Endothelial cell of umbilical vein (primary cell): ENCODE measurements at regions of chr10 and their contacts with region 1.

Region 1: DNA sequence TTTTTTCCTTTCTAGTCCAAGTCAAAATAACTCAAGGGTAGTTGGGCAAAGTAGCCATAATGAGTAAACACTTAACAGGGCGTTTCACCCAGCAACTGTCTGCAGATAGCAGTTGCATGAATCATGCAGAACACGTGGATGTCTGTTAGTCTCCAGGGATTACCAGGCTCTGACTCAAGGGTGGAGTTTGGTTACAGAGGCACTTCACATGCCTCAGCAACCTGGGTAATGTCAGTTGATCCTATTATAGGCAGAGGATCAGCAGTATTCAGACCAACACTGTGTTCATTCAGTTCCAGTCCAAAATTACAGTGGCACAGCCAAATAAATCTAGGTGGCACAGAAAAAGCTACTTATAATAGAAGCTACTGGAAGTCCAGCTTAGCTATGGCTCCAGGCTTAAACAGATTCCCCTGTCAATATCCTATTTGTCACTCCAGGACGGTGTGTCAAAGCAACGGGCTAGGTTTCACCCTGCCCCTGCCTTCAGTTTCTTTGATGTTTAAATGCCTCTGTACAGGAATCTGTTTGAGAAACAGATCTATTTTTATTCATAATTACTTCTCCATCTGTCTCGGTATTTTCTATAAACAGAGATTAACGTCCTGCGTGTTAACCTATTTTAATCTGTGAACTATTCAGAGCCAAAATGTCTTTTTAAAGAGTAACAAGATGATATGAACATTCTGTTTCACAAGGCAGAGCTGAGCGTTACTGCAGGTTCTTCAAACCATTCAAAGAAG is 162.7 kb upstream of the AKR1E2 start:
- DNase-seq: peak; percentile 97
- H3K4me3 ChIP-seq: no peak overlapping the region
- H3K27ac ChIP-seq: peak overlapping the region; percentile 97
- H3K4me1 ChIP-seq: peaks cover 23% of the 10 kb centered on the region
- H3K27me3 ChIP-seq: no peaks in the 10 kb centered on the region
- CTCF ChIP-seq: no peak
- POLR2A ChIP-seq: peak; percentile 65

Region 2: DNA sequence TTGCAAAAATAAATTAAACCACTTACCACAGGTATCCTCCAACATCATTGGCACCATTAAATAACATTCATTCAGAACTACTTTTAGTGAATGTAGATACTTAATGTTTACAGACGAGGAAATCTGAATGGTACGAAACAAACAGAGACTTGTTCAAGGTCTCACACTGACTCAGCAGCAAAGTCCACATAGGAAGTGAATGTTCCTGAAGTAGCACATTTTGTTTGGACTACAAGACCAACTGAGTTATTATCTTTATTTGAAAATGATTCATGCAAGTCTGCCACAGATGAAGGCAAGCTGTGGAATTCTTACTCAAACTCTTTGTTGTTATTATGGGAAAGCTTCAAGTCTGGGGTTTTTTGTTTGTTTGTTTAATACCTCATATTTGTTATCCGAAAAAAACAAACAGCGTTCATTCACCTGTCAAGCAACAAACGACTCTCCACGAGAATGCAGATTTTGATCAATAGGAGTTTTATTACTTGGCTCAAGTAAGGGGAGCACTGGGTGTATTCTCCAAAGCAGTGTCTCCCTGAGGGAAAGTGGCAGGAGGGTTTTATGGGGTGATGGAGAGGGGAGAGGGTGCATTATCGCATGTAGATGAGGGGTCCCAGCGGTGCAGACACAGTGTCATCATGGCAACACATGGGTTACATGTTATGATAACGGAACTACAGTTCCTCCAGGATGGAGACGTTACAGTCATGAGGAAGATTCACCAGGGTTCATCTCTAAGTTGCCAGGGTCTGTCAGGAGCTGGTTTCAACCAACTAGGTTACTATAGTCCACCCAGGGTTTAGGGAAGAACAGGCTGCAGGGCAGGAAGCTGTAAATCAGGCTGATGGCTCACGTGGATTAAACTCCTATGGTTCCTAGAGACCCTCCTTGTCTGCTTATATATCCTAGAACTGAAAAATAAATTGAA is 15.0 kb after region 1 on chr10:
- CTCF ChIA-PET with region 1: interaction called, 10 read pairs
- POLR2A ChIA-PET with region 1: interaction called, 10 read pairs
- dilution Hi-C with region 1: no loop called
- intact Hi-C with region 1: loop called (anchors 2 kb)
- DNase-seq: peak; percentile 94
- H3K4me3 ChIP-seq: peak overlapping the region; percentile 32 to 99 (median 71)
- H3K27ac ChIP-seq: peak overlapping the region; percentile 84
- H3K4me1 ChIP-seq: peaks cover 31% of the 10 kb centered on the region
- H3K27me3 ChIP-seq: no peaks in the 10 kb centered on the region
- CTCF ChIP-seq: no peak
- POLR2A ChIP-seq: no peak

Region 3: DNA sequence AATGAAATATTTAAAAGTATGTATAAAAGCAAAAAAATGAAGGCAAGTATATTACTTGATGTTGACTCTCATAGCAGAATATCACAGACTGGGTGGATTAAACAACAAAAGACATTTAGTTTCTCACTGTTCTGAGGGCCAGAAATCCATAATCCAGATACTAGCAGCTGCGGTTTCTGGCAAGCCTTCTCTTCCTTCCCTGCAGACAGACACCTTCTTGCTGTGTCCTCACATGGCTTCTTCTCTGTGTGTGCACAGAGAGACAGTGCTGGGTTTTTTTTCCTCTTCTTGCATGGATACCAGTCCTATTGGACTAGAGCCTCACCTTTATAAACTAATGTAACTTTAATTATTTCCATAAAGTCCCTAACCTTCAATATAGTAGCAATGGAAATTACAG is 34.7 kb after region 1 on chr10:
- CTCF ChIA-PET with region 1: no interaction called
- POLR2A ChIA-PET with region 1: no interaction called
- dilution Hi-C with region 1: no loop called
- intact Hi-C with region 1: no loop called
- DNase-seq: peak; percentile 38
- H3K4me3 ChIP-seq: no peak overlapping the region
- H3K27ac ChIP-seq: no peak overlapping the region
- H3K4me1 ChIP-seq: peaks cover 19% of the 10 kb centered on the region
- H3K27me3 ChIP-seq: no peaks in the 10 kb centered on the region
- CTCF ChIP-seq: no peak
- POLR2A ChIP-seq: no peak

Region 4: DNA sequence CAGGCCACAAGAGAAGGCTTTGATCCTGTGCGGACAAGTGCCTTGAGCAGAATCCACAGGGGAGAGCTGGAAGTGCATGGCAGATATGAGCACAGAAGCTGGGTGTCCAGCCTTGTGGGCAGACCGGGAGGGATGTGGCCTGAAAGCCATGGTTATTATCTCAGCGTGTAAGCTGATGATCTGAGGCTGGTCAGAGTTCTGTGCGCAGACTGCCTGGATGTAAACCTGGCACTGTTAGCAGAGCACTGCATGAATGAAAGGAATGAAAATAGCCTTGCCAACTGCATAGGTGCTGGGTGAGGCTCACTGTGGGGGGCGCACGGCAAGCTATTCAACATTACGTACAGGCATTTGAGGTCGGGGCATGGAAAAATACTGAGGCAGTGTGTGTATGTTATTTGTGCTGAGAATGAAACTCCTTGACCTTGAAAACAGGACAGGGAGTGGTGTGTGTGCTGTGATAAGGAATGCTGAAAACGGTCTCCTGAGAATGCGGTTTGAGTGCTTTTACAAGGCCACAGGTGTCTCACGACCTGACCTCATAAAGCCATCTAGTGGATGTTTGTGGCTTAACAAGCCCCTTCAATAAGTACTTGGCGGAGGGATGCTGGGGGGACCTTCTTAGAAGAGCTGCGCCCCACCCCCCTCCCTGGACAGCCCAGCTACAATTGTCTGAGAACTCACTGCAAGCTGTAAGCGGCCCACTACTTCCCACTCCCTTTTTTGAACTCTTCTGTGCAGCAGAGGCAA is 318.6 kb after region 1 on chr10:
- CTCF ChIA-PET with region 1: no interaction called
- POLR2A ChIA-PET with region 1: no interaction called
- dilution Hi-C with region 1: no loop called
- intact Hi-C with region 1: no loop called
- DNase-seq: peak; percentile 62
- H3K4me3 ChIP-seq: no peak overlapping the region
- H3K27ac ChIP-seq: no peak overlapping the region
- H3K4me1 ChIP-seq: peaks cover 3% of the 10 kb centered on the region
- H3K27me3 ChIP-seq: peaks cover 0 to 3% of the 10 kb centered on the region in 2 experiments
- CTCF ChIP-seq: peak; percentile 48 to 50
- POLR2A ChIP-seq: no peak